Esophagus muscularis mucosa (tissue), 4 donors: ENCODE measurements at regions of chr6 and their contacts with region 1.

Region 1: GRCh38 chr6:36563237-36563927 is 16.1 kb upstream of the STK38 start:
- DNase-seq: no peak
- H3K4me3 ChIP-seq: no peak overlapping the region
- H3K27ac ChIP-seq: no peak overlapping the region
- H3K4me1 ChIP-seq: no peaks in the 10 kb centered on the region
- H3K27me3 ChIP-seq: no peaks in the 10 kb centered on the region
- CTCF ChIP-seq: no peak
- EP300 ChIP-seq: no peak
- POLR2A ChIP-seq: no peak

Region 2: GRCh38 chr6:35500782-35501181 is 1062.6 kb before region 1 on chr6:
- intact Hi-C with region 1: loop called (anchors 10 kb)
- DNase-seq: no peak
- H3K4me3 ChIP-seq: no peak overlapping the region
- H3K27ac ChIP-seq: no peak overlapping the region
- H3K4me1 ChIP-seq: peaks cover 13 to 22% (median 19%) of the 10 kb centered on the region in 4 donors
- H3K27me3 ChIP-seq: peaks cover 0 to 37% (median 9%) of the 10 kb centered on the region in 4 donors
- CTCF ChIP-seq: no peak
- EP300 ChIP-seq: no peak
- POLR2A ChIP-seq: no peak

Region 3: GRCh38 chr6:36780442-36781177 is 217.2 kb after region 1 on chr6:
- intact Hi-C with region 1: no loop called
- DNase-seq: no peak
- H3K4me3 ChIP-seq: no peak overlapping the region
- H3K27ac ChIP-seq: no peak overlapping the region
- H3K4me1 ChIP-seq: no peaks in the 10 kb centered on the region
- H3K27me3 ChIP-seq: peaks cover 0 to 15% (median 0%) of the 10 kb centered on the region in 4 donors
- CTCF ChIP-seq: no peak
- EP300 ChIP-seq: no peak
- POLR2A ChIP-seq: no peak